PC-3 (cell line): ENCODE measurements at regions of chr21 and their contacts with region 1.

Region 1: GRCh38 chr21:34881894-34882371 is 167.2 kb downstream of the RUNX1 start:
- DNase-seq: peak; percentile 96
- ATAC-seq: peak; percentile 40
- H3K4me3 ChIP-seq: peak overlapping the region; percentile 95
- H3K27ac ChIP-seq: peak overlapping the region; percentile 97
- H3K4me1 ChIP-seq: peaks cover 66% of the 10 kb centered on the region
- H3K27me3 ChIP-seq: no peaks in the 10 kb centered on the region
- CTCF ChIP-seq: no peak

Region 2: GRCh38 chr21:34693192-34693810 is 188.6 kb before region 1 on chr21:
- CTCF ChIA-PET with region 1: no interaction called
- POLR2A ChIA-PET with region 1: interaction called, 6 read pairs
- intact Hi-C with region 1: loop called (anchors 2 kb)
- DNase-seq: peak; percentile 83
- ATAC-seq: peak; percentile 65
- H3K4me3 ChIP-seq: no peak overlapping the region
- H3K27ac ChIP-seq: no peak overlapping the region
- H3K4me1 ChIP-seq: peaks cover 38% of the 10 kb centered on the region
- H3K27me3 ChIP-seq: no peaks in the 10 kb centered on the region
- CTCF ChIP-seq: peak; percentile 93

Region 3: DNA sequence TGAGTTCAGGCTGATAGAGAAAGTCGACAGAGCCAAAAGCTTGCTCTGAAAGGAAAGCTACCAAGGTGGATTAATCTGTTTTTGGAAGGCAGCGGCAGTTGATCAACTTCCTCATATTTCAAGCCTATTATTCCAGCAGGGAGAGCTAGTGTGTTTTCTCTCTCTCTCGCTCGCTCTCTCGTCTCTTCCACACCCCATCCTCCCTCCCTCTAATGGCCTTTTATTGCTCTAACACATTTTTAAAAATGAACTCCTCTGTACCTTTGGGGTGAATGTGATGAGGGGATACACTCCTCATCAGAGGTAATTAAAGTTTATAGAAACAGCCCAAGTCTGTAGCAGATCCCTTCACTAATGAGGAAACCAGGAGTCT is 86.8 kb before region 1 on chr21:
- CTCF ChIA-PET with region 1: interaction called, 3 read pairs
- POLR2A ChIA-PET with region 1: interaction called, 5 read pairs
- intact Hi-C with region 1: loop called (anchors 1 kb)
- DNase-seq: no peak
- ATAC-seq: peak; percentile 4; the same call in 1 of the 2 replicates
- H3K4me3 ChIP-seq: no peak overlapping the region
- H3K27ac ChIP-seq: peak overlapping the region; percentile 89
- H3K4me1 ChIP-seq: peaks cover 46% of the 10 kb centered on the region
- H3K27me3 ChIP-seq: no peaks in the 10 kb centered on the region
- CTCF ChIP-seq: peak; percentile 39

Region 4: DNA sequence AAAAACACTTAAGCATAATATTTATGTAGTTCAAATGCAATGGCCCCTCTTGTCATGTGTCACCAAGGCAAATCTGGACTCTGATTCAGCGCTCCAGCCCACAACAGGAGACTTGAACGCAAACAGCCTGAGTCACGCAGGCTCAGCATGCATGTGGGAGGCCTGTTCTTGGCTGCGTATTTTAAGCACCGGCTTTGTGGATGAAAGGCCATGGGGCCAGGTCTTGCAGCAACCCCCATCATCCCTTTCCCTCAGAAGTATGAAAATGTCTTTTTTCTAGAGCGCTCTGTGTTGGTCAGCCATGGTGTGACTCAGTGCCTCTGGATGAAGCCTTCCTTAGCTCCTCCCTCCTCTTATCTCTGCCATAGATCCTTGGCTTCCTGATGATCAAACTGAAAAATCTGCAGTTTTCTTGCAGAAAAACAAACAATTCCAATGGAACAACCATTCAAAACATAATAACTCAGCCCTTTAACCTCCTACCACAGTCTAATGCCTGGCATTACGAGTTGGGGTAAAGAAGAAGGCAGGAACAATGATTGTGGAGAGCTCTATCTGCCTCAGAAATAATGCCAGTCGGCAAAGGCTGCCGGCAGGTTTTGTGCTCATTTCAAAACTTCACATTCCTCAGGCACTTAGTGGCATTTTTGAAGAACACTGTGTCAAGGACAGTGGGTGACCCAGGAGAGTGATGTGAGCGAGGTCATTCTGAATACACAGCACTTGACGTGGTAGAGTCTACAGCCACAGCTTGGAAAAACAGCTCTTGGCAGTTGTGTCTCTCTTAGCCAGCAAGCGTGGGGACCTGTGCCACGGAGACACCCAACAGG is 45.6 kb before region 1 on chr21:
- CTCF ChIA-PET with region 1: no interaction called
- POLR2A ChIA-PET with region 1: interaction called, 4 read pairs
- intact Hi-C with region 1: loop called (anchors 1 kb)
- DNase-seq: peak; percentile 99
- ATAC-seq: peak; percentile 94
- H3K4me3 ChIP-seq: peak overlapping the region; percentile 7; the same call in 1 of the 2 replicates
- H3K27ac ChIP-seq: peak overlapping the region; percentile 88
- H3K4me1 ChIP-seq: peaks cover 35% of the 10 kb centered on the region
- H3K27me3 ChIP-seq: no peaks in the 10 kb centered on the region
- CTCF ChIP-seq: no peak

Region 5: DNA sequence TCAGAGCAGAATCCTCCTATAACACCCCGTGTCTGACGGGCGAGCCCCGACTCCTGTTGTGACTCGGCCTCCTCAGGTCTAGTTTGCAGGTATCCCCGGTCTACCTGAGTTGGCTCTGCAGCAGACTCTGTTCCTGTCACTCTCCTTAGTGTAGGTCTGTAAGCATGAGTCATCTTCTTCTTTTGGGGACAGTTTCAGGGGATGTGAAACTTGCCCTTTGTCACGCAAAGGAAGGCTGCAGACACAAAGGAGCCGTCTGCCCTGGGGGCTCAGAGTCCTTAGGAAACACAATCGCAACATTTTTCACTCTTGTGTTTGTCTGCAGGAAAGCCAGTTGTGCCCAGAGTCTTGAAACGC is 16.0 kb before region 1 on chr21:
- CTCF ChIA-PET with region 1: no interaction called
- POLR2A ChIA-PET with region 1: interaction called, 5 read pairs
- intact Hi-C with region 1: loop called (anchors 2 kb)
- DNase-seq: peak; percentile 62
- ATAC-seq: peak; percentile 6; the same call in 1 of the 2 replicates
- H3K4me3 ChIP-seq: no peak overlapping the region
- H3K27ac ChIP-seq: peak overlapping the region; percentile 78
- H3K4me1 ChIP-seq: peaks cover 50% of the 10 kb centered on the region
- H3K27me3 ChIP-seq: no peaks in the 10 kb centered on the region
- CTCF ChIP-seq: no peak